B cell (primary cell): ENCODE measurements at regions of chr11 and their contacts with region 1.

Region 1: GRCh38 chr11:2992234-2992996 is at the start of gene NAP1L4:
- DNase-seq: peak; percentile 98
- ATAC-seq: peak; percentile 88
- H3K4me3 ChIP-seq: peak within 1 kb of the TSS; percentile 71 to 97 (median 88)
- H3K4me3 Mint-ChIP-seq: peak within 1 kb of the TSS; percentile 96
- H3K27ac ChIP-seq: peak within 1 kb of the TSS; percentile 71 to 87
- H3K27ac Mint-ChIP-seq: peak within 1 kb of the TSS; percentile 99
- H3K4me1 ChIP-seq: peaks cover 40 to 45% of the 10 kb centered on the region in 2 donors
- H3K4me1 Mint-ChIP-seq: peaks cover 43% of the 10 kb centered on the region
- H3K27me3 ChIP-seq: no peaks in the 10 kb centered on the region
- H3K27me3 Mint-ChIP-seq: no peaks in the 10 kb centered on the region
- CTCF ChIP-seq: no peak
- total RNA-seq, gene NAP1L4: 133 and 159 TPM in 2 replicates

Region 2: DNA sequence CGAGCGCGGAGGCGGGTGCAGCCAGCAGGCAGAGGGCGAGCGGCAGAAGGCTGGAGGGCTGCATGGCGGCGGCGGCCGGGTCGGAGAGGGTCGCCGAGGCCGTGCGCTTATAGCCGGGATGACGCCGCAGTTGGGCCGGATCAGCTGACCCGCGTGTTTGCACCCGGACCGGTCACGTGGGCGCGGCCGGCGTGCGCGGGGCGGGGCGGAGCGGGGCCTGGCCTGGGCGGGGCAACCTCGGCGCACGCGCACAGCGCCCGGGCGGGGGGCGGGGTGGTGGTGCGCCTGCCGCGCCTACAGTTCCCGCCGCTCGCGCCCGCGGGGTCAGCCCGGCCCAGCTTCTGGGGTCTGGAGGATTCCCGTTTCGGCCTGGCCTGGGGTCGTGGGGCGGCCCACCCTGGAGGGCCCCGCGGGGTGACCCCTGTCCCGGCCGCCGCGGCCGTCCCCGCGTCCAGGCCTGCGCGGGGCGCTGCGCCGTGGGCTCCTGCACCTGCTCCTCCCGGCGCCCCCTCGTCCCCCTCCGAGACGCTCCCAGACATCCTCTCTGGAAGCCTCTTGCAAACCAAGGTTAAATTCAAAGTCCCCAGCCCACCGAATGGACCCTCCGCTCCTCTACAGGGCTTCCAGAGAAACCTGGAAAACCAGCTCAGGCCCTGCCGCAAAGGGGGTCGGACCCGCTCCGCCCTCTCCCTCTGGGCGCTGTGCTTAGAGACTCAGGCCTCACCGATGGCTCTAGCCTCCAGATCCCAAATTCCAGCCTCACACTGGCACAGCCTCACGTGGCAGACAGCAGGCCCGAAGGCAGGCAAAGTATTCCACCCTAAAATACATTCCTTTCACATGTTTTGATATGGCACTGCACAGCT is 1228.4 kb before region 1 on chr11 and contains the start of gene CTSD:
- CTCF ChIA-PET with region 1: no interaction called
- POLR2A ChIA-PET with region 1: no interaction called
- intact Hi-C with region 1: loop called (anchors 5 kb)
- DNase-seq: peak; percentile 88
- ATAC-seq: peak; percentile 94
- H3K4me3 ChIP-seq: peak within 1 kb of the TSS; percentile 16 to 80 (median 71)
- H3K4me3 Mint-ChIP-seq: peak within 1 kb of the TSS; percentile 91
- H3K27ac ChIP-seq: peak within 1 kb of the TSS in 1 of 2 donors; percentile 62
- H3K27ac Mint-ChIP-seq: peak within 1 kb of the TSS; percentile 88
- H3K4me1 ChIP-seq: peaks cover 13 to 26% of the 10 kb centered on the region in 2 donors
- H3K4me1 Mint-ChIP-seq: peaks cover 14% of the 10 kb centered on the region
- H3K27me3 ChIP-seq: peaks cover 0 to 4% (median 0%) of the 10 kb centered on the region in 4 experiments
- H3K27me3 Mint-ChIP-seq: no peaks in the 10 kb centered on the region
- CTCF ChIP-seq: peak; percentile 8
- total RNA-seq, gene CTSD: 80.4 and 83.5 TPM in 2 replicates

Region 3: DNA sequence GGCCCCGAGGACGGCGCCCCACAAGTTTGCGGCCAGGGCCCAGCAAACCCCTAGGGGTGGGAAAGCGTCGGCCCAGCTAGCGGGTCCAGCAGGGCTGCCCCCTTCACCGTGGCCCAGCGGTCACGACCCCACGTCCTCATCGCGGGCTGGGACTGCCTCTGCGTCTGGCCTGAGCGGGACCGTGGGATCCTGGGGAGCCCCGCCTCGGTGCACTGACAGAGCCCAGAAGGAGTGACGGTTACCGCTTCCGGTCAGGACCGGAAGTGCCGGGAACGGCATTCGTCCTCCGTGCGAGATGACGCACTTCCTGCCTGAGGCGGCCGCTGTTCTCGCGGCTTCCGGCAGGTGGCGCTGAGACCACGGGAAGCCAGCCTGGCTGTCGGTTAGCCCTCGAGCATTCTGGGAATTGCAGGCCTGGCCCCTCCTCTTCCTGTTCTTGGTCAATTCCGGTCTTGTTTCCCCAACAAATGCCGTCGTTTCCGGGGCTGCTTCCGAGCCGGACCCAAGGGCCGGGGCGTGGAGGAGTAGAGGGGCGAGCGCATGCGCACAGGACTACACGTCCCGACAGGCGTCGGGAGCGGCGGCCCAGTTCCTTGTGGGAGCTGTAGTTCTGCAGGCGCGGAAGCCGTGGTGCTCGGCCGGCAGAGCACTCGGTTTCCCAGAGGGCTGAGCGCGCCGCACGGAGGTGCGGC is 592.2 kb before region 1 on chr11 and contains the start of gene TSSC4:
- CTCF ChIA-PET with region 1: no interaction called
- POLR2A ChIA-PET with region 1: no interaction called
- intact Hi-C with region 1: loop called (anchors 5 kb)
- DNase-seq: peak; percentile 100
- ATAC-seq: peak; percentile 81
- H3K4me3 ChIP-seq: peak within 1 kb of the TSS; percentile 87 to 100 (median 95)
- H3K4me3 Mint-ChIP-seq: peak within 1 kb of the TSS; percentile 90
- H3K27ac ChIP-seq: peak within 1 kb of the TSS; percentile 91 to 93
- H3K27ac Mint-ChIP-seq: peak within 1 kb of the TSS; percentile 98
- H3K4me1 ChIP-seq: peaks cover 26 to 40% of the 10 kb centered on the region in 2 donors
- H3K4me1 Mint-ChIP-seq: peaks cover 25% of the 10 kb centered on the region
- H3K27me3 ChIP-seq: no peaks in the 10 kb centered on the region
- H3K27me3 Mint-ChIP-seq: no peaks in the 10 kb centered on the region
- CTCF ChIP-seq: peak; percentile 94
- total RNA-seq, gene TSSC4: 57.5 and 59.5 TPM in 2 replicates

Region 4: DNA sequence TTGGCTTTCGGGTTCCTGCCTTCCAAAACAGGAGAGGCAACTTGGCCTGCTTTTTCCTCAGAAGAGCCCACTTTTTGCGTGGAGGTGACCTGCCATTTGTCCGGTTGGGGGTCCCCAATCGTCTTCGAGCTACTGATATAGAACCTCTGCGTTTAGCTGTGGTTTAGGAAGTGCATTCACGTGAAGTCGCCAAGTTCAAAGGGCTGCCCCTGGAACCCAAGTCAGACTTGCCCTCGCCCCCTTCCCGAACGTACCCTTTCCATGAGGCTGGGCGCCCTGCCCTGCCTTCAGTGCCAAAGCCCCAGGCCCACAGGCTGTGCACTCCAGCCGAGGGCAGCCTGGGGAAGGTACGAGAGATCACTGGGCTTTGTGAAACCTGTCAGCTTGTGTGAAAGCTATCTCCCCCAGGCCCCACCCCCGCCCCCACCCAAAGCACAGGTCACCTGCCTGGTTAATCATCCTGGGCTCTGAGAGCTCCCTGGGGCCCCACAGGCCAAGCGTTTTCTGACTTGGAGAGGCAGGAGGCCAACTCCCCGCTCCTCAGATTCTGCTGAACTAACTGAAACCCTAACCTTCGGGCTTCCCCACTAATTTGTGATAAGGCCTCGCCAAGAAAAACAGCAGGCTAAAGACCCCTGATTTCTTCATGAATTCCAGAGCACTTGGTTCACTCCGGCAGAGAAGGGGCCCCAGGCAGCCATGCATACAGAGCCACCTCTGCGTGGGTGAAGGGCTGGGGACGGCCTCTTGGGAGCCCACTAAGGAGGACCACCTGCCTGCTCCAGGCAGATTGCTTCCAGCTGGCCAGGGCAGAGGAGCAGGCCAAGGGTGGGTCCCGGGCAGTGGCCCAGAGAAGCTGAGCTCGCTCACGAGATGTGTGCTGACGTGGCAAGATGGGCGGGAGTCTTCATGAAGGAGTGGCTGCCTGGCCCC is 266.8 kb before region 1 on chr11:
- CTCF ChIA-PET with region 1: no interaction called
- POLR2A ChIA-PET with region 1: no interaction called
- intact Hi-C with region 1: no loop called
- DNase-seq: no peak
- ATAC-seq: no peak
- H3K4me3 ChIP-seq: no peak overlapping the region
- H3K4me3 Mint-ChIP-seq: no peak overlapping the region
- H3K27ac ChIP-seq: no peak overlapping the region
- H3K27ac Mint-ChIP-seq: no peak overlapping the region
- H3K4me1 ChIP-seq: no peaks in the 10 kb centered on the region
- H3K4me1 Mint-ChIP-seq: no peaks in the 10 kb centered on the region
- H3K27me3 ChIP-seq: no peaks in the 10 kb centered on the region
- H3K27me3 Mint-ChIP-seq: no peaks in the 10 kb centered on the region
- CTCF ChIP-seq: no peak

Region 5: GRCh38 chr11:2901854-2902783 is 90.3 kb before region 1 on chr11:
- CTCF ChIA-PET with region 1: no interaction called
- POLR2A ChIA-PET with region 1: no interaction called
- intact Hi-C with region 1: loop called (anchors 1 kb)
- DNase-seq: peak; percentile 88
- ATAC-seq: peak; percentile 97
- H3K4me3 ChIP-seq: peak overlapping the region; percentile 36 to 87 (median 66)
- H3K4me3 Mint-ChIP-seq: peak overlapping the region; percentile 85
- H3K27ac ChIP-seq: no peak overlapping the region
- H3K27ac Mint-ChIP-seq: peak overlapping the region; percentile 78
- H3K4me1 ChIP-seq: peaks cover 9 to 26% of the 10 kb centered on the region in 2 donors
- H3K4me1 Mint-ChIP-seq: peaks cover 20% of the 10 kb centered on the region
- H3K27me3 ChIP-seq: no peaks in the 10 kb centered on the region
- H3K27me3 Mint-ChIP-seq: peaks cover 5% of the 10 kb centered on the region
- CTCF ChIP-seq: no peak

Region 6: DNA sequence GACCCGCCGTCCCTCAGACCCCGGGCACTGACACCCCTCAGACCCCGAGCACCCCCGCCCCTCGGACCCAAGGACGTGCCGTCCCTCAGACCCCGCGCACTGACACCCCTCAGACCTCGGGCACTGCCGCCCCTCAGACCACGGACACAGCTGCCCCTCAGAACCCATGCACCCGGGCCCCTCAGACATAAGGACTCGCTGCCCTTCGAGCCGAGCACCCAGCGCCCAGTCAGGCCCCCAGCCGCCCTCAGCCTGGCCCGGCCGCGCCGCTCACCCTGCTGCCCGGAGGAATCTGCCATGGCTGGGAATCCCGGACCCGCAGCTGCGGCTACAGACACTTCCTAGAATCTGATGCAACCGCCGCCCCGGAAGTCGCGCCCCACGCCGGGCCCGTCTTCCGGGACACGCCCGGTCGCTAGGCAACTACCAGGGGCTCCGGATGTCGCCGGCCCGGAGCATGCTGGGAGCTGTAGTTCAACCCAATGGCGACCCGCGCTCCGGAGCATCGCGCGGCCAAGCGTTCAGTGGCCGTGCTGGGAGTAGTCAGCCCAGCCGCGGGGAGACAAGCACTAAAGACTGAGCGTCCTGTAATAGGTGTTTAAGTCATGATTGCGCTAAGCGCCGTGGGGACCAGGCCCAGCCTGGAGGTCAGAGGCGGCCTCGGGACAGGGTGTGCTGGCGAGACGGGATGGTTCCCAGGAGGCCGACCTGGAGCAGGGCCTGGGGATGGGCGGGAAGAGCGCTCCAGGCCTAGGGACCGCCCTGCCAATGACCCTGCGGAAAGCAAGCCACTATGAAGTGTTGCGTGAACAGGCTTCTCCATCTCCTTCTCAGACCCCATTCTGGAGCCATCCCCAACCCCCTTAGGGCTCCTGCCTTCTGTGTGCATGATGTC is 64.9 kb after region 1 on chr11 and contains the start of gene CARS1:
- CTCF ChIA-PET with region 1: no interaction called
- POLR2A ChIA-PET with region 1: interaction called, 3 read pairs
- intact Hi-C with region 1: loop called (anchors 1 kb)
- DNase-seq: peak; percentile 94
- ATAC-seq: peak; percentile 96
- H3K4me3 ChIP-seq: peak within 1 kb of the TSS; percentile 22 to 97 (median 87)
- H3K4me3 Mint-ChIP-seq: peak within 1 kb of the TSS; percentile 93
- H3K27ac ChIP-seq: peak within 1 kb of the TSS; percentile 43 to 94
- H3K27ac Mint-ChIP-seq: peak within 1 kb of the TSS; percentile 83
- H3K4me1 ChIP-seq: peaks cover 15 to 20% of the 10 kb centered on the region in 2 donors
- H3K4me1 Mint-ChIP-seq: peaks cover 35% of the 10 kb centered on the region
- H3K27me3 ChIP-seq: no peaks in the 10 kb centered on the region
- H3K27me3 Mint-ChIP-seq: no peaks in the 10 kb centered on the region
- CTCF ChIP-seq: no peak
- total RNA-seq, gene CARS1: 49.5 and 56.7 TPM in 2 replicates

Region 7: GRCh38 chr11:3130311-3131071 is 138.1 kb after region 1 on chr11:
- CTCF ChIA-PET with region 1: no interaction called
- POLR2A ChIA-PET with region 1: no interaction called
- intact Hi-C with region 1: no loop called
- DNase-seq: no peak
- ATAC-seq: no peak
- H3K4me3 ChIP-seq: no peak overlapping the region
- H3K4me3 Mint-ChIP-seq: no peak overlapping the region
- H3K27ac ChIP-seq: no peak overlapping the region
- H3K27ac Mint-ChIP-seq: no peak overlapping the region
- H3K4me1 ChIP-seq: no peaks in the 10 kb centered on the region
- H3K4me1 Mint-ChIP-seq: no peaks in the 10 kb centered on the region
- H3K27me3 ChIP-seq: no peaks in the 10 kb centered on the region
- H3K27me3 Mint-ChIP-seq: no peaks in the 10 kb centered on the region
- CTCF ChIP-seq: no peak

Region 8: GRCh38 chr11:3378426-3379423 is 386.3 kb after region 1 on chr11 and contains the start of gene ZNF195:
- CTCF ChIA-PET with region 1: no interaction called
- POLR2A ChIA-PET with region 1: interaction called, 3 read pairs
- intact Hi-C with region 1: loop called (anchors 2 kb)
- DNase-seq: peak; percentile 95
- ATAC-seq: peak; percentile 100
- H3K4me3 ChIP-seq: peak within 1 kb of the TSS; percentile 67 to 97 (median 87)
- H3K4me3 Mint-ChIP-seq: peak within 1 kb of the TSS; percentile 97
- H3K27ac ChIP-seq: peak within 1 kb of the TSS; percentile 63 to 92
- H3K27ac Mint-ChIP-seq: peak within 1 kb of the TSS; percentile 95
- H3K4me1 ChIP-seq: peaks cover 16 to 24% of the 10 kb centered on the region in 2 donors
- H3K4me1 Mint-ChIP-seq: peaks cover 39% of the 10 kb centered on the region
- H3K27me3 ChIP-seq: no peaks in the 10 kb centered on the region
- H3K27me3 Mint-ChIP-seq: no peaks in the 10 kb centered on the region
- CTCF ChIP-seq: no peak
- total RNA-seq, gene ZNF195: 46.0 and 47.3 TPM in 2 replicates